AG04449 (cell line): ENCODE measurements at regions of chr1 and their contacts with region 1.

Region 1: DNA sequence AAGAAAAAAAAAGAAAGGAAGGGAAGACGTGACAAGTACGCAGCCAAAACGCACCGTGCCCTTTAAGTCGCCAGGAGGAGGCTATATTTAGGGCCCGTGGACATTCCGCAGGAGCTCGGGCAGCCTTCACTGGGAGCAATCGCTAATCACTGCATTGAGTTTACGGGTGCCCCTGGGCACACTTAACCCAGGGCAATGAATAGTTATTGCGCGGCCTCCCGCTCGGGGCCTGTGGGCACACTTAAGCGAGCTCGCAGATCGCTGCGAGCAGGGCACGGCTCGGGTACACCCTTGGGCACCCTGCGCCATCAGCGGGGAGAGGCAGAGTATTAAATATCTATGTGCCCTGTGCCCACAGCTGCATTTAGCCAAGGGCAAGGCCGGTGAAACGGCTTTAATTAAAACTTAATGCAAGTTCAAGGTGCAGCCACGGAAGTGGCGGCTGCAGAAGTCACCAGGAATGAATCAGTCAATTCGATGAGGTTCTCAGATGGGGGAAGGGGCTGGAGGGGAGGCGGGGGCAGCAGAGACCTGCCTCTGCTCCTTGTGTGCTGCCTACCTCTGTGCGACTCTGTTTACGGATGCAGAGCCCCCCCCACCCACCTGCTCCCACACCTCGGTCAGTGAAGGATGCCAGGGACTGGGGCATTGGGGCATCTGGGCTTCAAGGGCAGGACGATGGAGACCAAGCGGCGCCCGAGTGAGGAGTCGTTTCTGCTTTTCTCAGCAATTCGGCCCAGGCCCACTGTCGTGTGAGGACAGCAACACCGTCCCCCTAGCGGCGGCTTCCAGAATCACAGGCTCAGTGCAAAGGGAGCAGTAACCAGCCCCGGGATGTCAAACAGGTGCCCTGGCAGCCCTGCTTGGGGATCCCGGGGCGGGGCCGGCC is 51.8 kb upstream of the TARDBP start:
- DNase-seq: no peak
- H3K4me3 ChIP-seq: no peak overlapping the region
- CTCF ChIP-seq: peak; percentile 93

Region 2: DNA sequence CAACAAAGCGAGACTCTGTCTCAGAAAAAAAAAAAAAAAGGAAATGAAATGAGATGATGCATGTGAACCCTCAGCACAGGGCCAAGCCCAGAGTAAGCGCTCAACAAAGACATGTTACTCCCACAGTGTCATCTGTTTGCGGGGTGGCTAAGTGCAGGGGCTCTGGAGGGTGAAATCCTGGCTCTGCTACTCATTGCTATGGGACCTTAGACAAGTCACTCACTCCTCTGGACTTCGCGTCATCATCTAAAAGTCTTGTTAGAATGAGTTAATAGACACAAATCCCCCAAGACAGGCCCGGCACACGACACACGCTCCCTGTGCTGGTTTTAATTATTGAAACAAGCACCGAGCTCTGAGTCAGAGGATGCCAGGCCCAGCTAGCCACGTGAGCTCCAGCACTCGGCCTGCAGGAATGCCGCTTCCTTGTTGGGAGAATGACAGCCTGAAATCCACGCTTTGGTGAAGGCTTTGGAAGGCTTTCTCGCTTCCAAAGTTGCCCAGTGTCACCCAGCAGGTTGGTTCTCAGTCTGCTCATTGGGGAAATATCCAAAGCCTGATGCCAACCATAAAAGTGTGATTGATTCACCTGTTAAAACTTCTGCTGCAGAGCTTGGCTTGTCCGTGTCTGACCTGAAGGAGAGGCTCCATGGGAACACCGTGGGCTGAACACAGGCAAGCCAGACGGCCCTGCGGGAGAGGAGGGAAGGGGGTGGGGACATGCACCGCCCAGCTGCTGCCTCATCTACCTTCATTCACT is 15.1 kb after region 1 on chr1:
- CTCF ChIA-PET with region 1: interaction called, 17 read pairs
- POLR2A ChIA-PET with region 1: no interaction called
- DNase-seq: peak; percentile 73
- H3K4me3 ChIP-seq: peak overlapping the region; percentile 3; the same call in 1 of the 2 replicates
- CTCF ChIP-seq: no peak